AG04449 (cell line): ENCODE measurements at regions of chr12 and their contacts with region 1.

Region 1: DNA sequence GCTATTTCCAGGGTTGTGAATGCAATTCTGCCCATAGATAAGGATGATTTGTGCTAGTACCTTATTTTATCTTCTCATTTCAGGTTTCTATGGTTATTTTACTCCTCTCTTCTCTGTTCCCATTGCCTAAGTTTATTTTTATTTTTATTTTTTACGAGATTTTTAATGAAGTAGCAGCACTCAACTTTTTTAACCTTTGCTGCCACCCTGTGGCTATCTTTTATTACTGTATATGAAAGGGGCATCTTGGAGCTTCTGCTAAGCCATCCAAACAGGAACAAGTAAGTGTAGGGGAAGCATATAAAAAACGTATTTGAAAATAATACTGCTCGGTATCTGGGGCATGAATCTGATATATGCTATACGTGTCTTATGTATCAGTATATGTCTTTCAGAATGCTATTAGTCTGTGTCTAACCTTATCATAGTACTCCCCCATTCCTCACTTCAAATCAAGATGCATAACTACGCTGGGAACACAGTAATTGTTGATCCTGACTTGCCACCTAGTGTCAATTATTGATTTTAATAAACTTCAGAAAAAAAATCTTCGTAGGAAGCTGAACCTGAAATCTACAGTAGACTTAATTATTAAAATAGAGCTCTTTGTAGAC is 60.3 kb downstream of the KLRG1 start:
- DNase-seq: no peak
- H3K4me3 ChIP-seq: no peak overlapping the region
- CTCF ChIP-seq: no peak

Region 2: GRCh38 chr12:8681041-8681902 is 368.4 kb before region 1 on chr12:
- CTCF ChIA-PET with region 1: interaction called, 12 read pairs
- POLR2A ChIA-PET with region 1: no interaction called
- DNase-seq: no peak
- H3K4me3 ChIP-seq: no peak overlapping the region
- CTCF ChIP-seq: no peak

Region 3: DNA sequence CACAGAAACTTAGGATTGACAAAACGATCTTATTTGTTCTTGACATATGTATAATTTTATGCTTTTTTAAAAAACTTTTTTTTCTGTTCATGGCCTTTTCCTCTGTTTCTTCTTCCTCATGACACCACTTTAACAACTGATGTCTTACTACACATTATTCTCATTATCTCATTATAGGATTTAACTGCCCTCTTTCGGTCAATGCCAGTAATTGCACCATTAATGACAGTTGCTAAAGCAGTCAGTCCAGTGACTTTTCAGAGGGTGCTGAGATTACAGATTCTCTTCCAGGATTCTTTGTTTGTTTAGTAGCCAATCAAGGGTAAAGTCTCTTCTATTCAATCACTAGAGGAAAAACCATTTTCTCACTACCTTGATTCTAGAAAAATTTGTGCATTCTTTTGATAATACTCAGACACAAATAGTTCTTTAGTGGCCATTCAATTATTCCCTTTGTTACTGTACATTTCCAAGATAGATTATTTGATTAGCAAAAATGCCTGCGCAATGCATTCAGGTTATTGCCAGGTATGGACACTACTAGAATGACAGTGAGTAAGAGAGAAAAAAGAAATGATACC is 10.1 kb before region 1 on chr12:
- CTCF ChIA-PET with region 1: interaction called, 13 read pairs
- POLR2A ChIA-PET with region 1: no interaction called
- DNase-seq: no peak
- H3K4me3 ChIP-seq: no peak overlapping the region
- CTCF ChIP-seq: peak; percentile 60

Region 4: DNA sequence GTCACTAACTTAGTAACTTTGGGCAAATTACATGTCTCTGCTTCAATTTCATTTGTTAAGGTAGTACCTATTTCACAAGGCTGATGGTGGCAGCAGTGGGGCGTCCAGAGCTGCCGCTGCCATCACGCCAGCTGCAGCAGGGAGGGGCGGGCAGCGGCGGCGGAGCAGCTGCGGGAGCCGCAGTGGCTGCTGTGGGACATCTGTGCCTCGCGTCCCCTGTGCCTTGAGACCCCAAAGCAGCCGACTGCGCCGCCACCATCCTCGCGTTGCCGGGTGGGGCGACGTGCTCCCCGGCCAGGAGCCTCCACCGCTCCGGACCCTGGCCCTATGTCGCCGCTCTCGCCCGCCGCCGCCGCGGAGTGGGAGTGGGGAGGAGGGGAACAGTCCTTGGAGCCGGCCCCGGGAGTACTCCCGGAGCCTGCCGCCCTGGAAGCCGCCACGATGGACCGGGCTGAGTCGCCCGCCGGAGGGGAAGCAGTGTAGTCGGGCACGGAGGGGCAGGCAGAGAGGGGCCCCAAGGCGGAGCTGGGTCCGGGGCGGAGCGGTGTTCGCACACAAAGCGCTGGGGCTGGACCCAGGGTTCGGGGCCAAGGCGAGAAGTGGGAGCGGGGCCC is 14.7 kb after region 1 on chr12:
- CTCF ChIA-PET with region 1: interaction called, 12 read pairs
- POLR2A ChIA-PET with region 1: no interaction called
- DNase-seq: no peak
- H3K4me3 ChIP-seq: peak overlapping the region; percentile 59
- CTCF ChIP-seq: peak; percentile 16